Cardiac septum (tissue), 1 donor: ENCODE measurements at regions of chr19 and their contacts with region 1.

Region 1: GRCh38 chr19:52570000-52570861 is at the start of gene ZNF701:
- DNase-seq: peak; percentile 98
- total RNA-seq, gene ZNF701: 20.7 TPM

Region 2: GRCh38 chr19:52369559-52370340 is 200.5 kb before region 1 on chr19 and contains the start of gene ZNF880:
- intact Hi-C with region 1: loop called (anchors 10 kb)
- DNase-seq: peak; percentile 95
- total RNA-seq, gene ZNF880: 18.3 TPM

Region 3: DNA sequence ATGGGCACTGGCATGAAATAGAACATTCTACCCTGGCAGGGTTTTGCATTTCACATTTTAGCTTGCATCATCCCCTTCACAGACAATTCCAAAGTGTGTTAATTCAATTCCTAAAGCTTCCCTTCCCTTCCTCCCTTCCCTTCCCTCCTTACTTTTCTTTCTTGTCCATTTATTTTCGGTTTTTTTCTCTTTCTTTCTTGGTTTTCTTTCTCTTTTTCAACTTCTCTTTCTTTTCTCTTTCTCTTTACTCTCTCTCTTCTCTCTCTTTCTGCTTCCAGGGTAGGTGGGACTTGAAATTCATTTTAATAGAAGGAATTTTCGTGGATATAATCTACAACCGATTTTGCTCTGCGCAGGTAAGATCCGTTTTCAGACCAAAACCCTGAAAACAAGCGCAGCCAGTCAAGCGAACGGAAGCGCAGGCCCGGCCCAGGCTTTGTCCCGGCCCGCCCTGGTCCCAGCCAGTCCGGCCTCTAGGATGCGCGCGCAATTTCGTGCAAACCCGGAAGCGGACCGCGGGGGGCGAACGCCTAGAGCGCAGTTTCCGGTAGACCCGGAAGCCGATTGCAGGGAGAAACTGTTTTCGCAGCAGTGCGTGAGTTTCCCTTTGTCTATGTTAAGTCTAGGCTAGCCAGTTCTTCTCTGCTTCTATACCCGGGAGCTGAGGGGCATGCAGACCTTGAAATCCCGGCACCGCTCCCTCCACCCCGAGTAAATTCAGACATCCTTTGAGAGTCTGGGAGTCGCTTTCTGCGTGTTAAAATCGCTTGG is 172.7 kb before region 1 on chr19 and contains the start of gene ZNF528:
- intact Hi-C with region 1: loop called (anchors 10 kb)
- DNase-seq: peak; percentile 98
- total RNA-seq, gene ZNF528: 21.5 TPM

Region 4: GRCh38 chr19:52527134-52527955 is 42.9 kb before region 1 on chr19 and contains the start of gene ZNF808:
- intact Hi-C with region 1: loop called (anchors 5 kb)
- DNase-seq: peak; percentile 98
- total RNA-seq, gene ZNF808: 30.5 TPM

Region 5: DNA sequence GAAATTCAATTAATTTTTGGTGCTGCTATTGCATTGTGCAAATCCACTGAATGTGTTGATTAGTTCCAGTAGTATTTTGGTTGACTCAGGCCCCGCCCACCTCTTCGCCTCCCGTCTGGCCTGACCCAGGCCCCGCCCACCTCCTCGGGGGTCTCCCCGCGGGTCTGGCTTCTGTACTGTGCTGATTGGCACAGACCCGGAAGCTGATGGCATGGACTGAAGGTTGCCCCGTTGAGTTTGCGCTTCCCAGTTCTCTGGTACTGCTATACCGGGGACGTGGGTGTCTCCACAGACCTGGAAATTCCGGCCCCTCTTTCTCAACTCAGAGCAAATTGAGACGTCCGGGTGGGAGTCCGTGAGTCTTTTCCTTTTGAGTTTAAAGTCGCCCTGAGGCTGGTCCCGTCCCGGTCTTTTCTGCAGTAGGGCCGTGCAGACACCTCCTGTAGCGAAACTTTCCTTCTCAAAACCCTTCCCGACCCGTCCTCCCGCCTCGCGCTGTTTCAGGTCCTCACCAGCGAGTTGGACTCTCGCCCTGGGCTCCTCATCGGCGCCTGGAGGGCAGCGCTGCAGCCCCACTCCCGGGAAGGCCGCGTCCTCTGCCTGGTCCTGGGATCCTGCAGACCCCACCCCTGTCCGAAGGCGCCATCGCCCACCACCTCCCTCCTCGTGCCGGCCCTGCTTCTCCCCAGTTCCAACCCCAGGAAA is 14.7 kb after region 1 on chr19:
- intact Hi-C with region 1: no loop called
- DNase-seq: no peak